ENCODE measurements at regions of chr19 and their contacts with region 1.

Region 1: DNA sequence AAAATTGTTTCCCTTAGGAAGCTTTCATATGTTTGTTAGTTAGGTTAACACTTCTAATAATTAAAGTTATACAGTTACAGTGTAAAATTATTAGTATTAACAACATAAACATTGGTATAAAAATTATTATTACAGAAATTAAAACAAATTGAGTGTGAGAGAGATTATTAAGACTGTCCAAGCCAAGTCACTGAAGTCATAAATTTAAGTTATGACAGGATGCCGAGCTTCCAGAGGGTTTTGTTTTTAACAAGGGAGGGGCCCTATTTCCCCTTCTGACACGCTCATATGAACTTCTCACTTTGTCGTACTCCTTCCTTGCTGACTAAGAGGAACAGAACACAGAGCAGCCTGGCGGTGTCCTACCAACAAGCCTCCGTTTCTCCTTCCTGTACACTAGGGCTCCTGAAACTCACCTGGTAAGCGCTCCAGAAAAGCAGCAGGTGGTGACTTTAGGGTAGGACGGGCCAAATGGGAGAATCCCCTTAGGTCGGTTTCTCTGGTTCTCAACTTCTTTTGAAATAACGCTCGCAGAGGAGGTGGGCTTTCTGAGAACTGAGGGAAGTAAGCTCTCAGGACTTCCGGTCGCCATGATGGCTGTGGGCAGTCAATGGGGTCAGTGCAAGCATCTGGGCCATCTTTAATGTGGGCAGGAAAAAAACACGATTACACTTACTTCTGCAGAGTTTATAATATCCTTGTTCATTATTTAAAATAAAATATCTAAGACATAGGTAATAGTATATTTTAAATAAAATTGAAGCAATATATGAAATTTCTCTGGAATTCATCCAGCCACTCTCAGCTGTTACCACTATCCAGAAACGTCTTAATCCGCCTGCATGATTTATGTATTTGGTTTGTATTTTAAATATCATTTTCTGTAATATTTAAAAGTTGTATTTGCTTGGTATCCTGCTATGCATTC is at the start of gene CARD8:
- DNase-seq: peak; percentile 84
- ATAC-seq: peak; percentile 82
- H3K4me3 ChIP-seq: peak within 1 kb of the TSS; percentile 60 to 73
- H3K27ac ChIP-seq: peak within 1 kb of the TSS; percentile 86
- H3K4me1 ChIP-seq: peaks cover 3 to 11% of the 10 kb centered on the region in 2 experiments; a peak in 2 of 4 replicates
- H3K27me3 ChIP-seq: no peaks in the 10 kb centered on the region
- CTCF ChIP-seq: no peak
- POLR2A ChIP-seq: no peak
- RAD21 ChIP-seq: no peak
- total RNA-seq, gene CARD8: 17.5 TPM

Region 2: GRCh38 chr19:48110350-48110966 is 145.2 kb before region 1 on chr19 and contains the start of gene PLA2G4C:
- CTCF ChIA-PET with region 1: interaction called, 6 read pairs
- POLR2A ChIA-PET with region 1: no interaction called
- RAD21 ChIA-PET with region 1: interaction called in 1 of 2 experiments, 4 read pairs
- intact Hi-C with region 1: loop called (anchors 1 kb)
- DNase-seq: peak; percentile 77
- ATAC-seq: peak; percentile 71
- H3K4me3 ChIP-seq: peak within 1 kb of the TSS; percentile 68 to 72
- H3K27ac ChIP-seq: peak within 1 kb of the TSS; percentile 88
- H3K4me1 ChIP-seq: peaks cover 15 to 29% of the 10 kb centered on the region in 2 experiments
- H3K27me3 ChIP-seq: no peaks in the 10 kb centered on the region
- CTCF ChIP-seq: no peak
- POLR2A ChIP-seq: peak; percentile 33
- RAD21 ChIP-seq: no peak
- total RNA-seq, gene PLA2G4C: 1.7 TPM

Region 3: DNA sequence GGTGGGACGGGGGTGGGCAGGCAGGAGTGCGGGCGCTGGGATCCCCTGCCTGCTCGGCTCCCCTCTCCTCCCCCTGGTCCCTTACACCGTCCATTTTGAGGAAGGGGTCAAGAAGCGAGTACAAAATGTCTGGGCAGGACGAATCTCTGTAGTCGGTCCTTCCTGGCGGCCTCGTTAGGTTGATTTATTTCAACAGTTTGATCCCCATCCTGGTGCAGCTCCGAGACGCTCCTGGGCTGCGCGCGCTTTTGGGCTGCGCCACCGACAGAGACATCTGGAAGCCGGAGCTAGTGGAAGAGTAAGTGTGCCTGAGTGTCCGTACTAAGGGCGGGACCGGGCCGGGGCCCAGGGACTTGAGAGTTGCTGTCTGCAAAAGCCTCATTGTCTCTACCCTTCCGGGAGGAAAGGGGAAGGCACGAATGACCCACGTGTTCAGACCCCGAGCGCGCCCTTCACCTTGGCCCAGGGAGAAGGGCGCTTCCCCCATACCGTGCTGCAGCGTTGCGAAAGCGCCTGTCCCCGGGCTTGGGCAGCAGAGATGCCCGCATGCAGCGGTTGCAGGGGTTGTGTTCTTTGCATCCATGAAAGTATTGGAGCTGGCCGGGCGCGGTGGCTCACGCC is 16.0 kb after region 1 on chr19:
- CTCF ChIA-PET with region 1: interaction called, 10 read pairs
- POLR2A ChIA-PET with region 1: no interaction called
- RAD21 ChIA-PET with region 1: no interaction called
- intact Hi-C with region 1: no loop called
- DNase-seq: no peak
- ATAC-seq: peak; percentile 43
- H3K4me3 ChIP-seq: peak overlapping the region; percentile 56 to 61
- H3K27ac ChIP-seq: peak overlapping the region; percentile 85
- H3K4me1 ChIP-seq: peaks cover 18 to 43% of the 10 kb centered on the region in 2 experiments
- H3K27me3 ChIP-seq: no peaks in the 10 kb centered on the region
- CTCF ChIP-seq: no peak
- POLR2A ChIP-seq: peak; percentile 44
- RAD21 ChIP-seq: no peak

Measured in HCT116 (cell line).